Caco-2 (cell line): ENCODE measurements at regions of chr11 and their contacts with region 1.

Region 1: DNA sequence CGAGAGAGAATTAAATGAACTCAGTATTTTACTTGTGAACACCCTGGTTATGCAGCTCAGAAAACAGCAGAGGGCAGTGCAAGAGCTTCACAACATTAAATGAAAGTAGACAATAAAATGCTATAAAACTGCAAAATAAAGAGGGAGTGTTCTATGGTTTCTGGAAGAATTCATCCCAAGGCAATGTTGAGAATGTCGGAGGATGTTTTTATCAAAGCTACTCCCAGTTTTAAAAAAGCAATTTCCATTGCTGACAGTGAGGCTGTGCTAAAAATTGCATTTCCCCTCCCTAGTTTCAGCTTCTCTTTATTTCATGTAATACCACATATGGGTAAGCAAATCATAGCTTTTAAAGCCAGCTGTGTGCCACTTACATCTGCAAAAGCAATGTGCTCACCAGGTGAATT is 296.9 kb downstream of the RAB38 start:
- DNase-seq: peak; percentile 32 to 45
- H3K4me3 ChIP-seq: no peak overlapping the region
- H3K4me3 Mint-ChIP-seq: no peak overlapping the region
- H3K27ac Mint-ChIP-seq: no peak overlapping the region
- H3K4me1 ChIP-seq: no peaks in the 10 kb centered on the region
- H3K4me1 Mint-ChIP-seq: no peaks in the 10 kb centered on the region
- H3K27me3 ChIP-seq: no peaks in the 10 kb centered on the region
- H3K27me3 Mint-ChIP-seq: no peaks in the 10 kb centered on the region
- CTCF ChIP-seq: peak; percentile 78 to 82

Region 2: GRCh38 chr11:87892291-87892690 is 13.9 kb after region 1 on chr11:
- CTCF ChIA-PET with region 1: interaction called, 7 read pairs
- POLR2A ChIA-PET with region 1: no interaction called
- intact Hi-C with region 1: loop called (anchors 2 kb)
- DNase-seq: no peak
- H3K4me3 ChIP-seq: no peak overlapping the region
- H3K4me3 Mint-ChIP-seq: no peak overlapping the region
- H3K27ac Mint-ChIP-seq: no peak overlapping the region
- H3K4me1 ChIP-seq: peaks cover 8% of the 10 kb centered on the region
- H3K4me1 Mint-ChIP-seq: peaks cover 13% of the 10 kb centered on the region
- H3K27me3 ChIP-seq: no peaks in the 10 kb centered on the region
- H3K27me3 Mint-ChIP-seq: no peaks in the 10 kb centered on the region
- CTCF ChIP-seq: no peak

Region 3: GRCh38 chr11:87934182-87934581 is 55.8 kb after region 1 on chr11:
- CTCF ChIA-PET with region 1: interaction called, 6 read pairs
- POLR2A ChIA-PET with region 1: no interaction called
- intact Hi-C with region 1: loop called (anchors 1 kb)
- DNase-seq: no peak
- H3K4me3 ChIP-seq: no peak overlapping the region
- H3K4me3 Mint-ChIP-seq: no peak overlapping the region
- H3K27ac Mint-ChIP-seq: no peak overlapping the region
- H3K4me1 ChIP-seq: no peaks in the 10 kb centered on the region
- H3K4me1 Mint-ChIP-seq: no peaks in the 10 kb centered on the region
- H3K27me3 ChIP-seq: no peaks in the 10 kb centered on the region
- H3K27me3 Mint-ChIP-seq: peaks cover 10% of the 10 kb centered on the region
- CTCF ChIP-seq: no peak